Activated naive CD4-positive, alpha-beta T cell treated with anti-CD3 and anti-CD28 coated beads for 36 hours (primary cell): ENCODE measurements at regions of chr1 and their contacts with region 1.

Region 1: DNA sequence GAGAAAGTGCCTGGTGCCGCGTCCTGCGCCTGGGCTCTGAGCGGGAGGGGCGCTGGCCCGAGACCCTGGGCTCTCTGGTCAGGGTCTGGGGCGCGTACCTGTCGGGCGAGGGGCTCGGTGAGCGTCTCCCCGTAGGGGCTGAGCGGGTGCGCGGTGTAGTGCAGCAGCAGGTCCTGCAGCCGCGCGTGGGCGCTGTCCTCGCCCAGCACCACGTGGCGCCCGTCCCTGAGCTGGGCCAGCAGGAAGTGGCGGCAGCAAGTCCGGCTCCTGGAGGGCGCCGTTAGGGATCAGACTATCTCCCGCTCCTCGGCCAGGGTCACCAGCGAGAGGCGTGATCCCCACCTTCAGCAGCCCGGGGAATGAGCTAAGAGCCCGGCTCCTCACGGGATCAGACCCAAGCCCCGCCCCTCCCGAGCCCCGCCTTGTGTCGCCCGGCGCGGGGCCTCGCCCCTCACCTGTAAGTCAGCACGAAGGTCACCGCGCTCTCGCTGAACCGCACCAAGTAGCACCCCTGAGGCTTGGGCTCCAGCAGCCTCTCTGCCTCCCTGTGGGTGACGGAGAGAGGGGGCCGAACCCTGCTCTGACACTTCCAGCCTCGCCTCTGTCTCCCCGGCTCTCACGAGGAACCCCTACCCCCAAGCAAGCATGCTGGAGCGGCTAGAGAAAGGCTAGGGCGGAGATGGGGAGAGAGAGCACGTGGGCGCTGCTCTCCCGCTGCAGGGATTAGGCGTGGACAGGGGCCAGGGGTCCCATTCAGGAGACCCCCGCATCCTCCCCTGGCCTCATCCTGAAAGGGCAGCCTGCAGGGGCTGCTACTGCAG is 2.7 kb downstream of the SH2D2A start:
- DNase-seq: peak; percentile 77
- H3K4me3 Mint-ChIP-seq: peak overlapping the region; percentile 93
- H3K27ac Mint-ChIP-seq: peak overlapping the region; percentile 100
- H3K4me1 Mint-ChIP-seq: peaks cover 62% of the 10 kb centered on the region
- H3K27me3 Mint-ChIP-seq: no peaks in the 10 kb centered on the region

Region 2: DNA sequence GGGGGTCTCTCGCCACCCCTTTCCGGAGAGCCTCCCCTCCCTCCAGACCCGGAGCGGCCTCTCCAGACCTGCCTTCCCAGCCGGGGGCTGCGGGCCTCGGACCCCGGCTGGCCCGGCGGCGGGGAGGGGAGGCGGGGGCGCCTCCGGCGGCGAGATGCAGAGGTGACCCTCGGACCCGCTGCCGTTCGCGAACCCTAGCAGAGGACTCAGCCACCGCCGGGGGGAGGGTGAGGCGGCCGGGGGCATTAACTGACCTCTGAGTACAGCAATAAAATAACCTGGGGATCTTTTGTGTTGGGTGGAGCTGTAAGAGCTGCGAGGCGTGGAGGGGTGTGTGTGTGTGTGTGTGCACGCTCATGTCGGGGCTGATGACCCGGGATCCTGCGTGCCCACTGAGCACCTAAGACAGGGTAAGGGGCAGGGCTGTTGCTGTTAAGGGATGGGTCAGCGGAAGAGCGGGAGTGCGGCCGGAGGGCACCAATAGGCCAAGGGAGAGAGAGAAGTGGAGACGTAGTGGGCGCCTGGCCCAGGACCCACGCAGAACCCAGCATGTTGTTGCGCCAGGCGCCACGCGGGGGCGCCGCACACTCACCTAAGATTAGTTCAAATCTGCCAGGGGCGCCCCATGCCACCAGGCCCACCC is 188.4 kb before region 1 on chr1:
- CTCF ChIA-PET with region 1: no interaction called
- intact Hi-C with region 1: no loop called
- DNase-seq: peak; percentile 65
- H3K4me3 Mint-ChIP-seq: peak overlapping the region; percentile 36
- H3K27ac Mint-ChIP-seq: no peak overlapping the region
- H3K4me1 Mint-ChIP-seq: peaks cover 7% of the 10 kb centered on the region
- H3K27me3 Mint-ChIP-seq: peaks cover 40% of the 10 kb centered on the region

Region 3: GRCh38 chr1:156740679-156741612 is 73.0 kb before region 1 on chr1 and contains the start of gene MRPL24:
- CTCF ChIA-PET with region 1: no interaction called
- intact Hi-C with region 1: loop called (anchors 1 kb)
- DNase-seq: peak; percentile 99
- H3K4me3 Mint-ChIP-seq: peak within 1 kb of the TSS; percentile 98
- H3K27ac Mint-ChIP-seq: peak within 1 kb of the TSS; percentile 98
- H3K4me1 Mint-ChIP-seq: peaks cover 40% of the 10 kb centered on the region
- H3K27me3 Mint-ChIP-seq: no peaks in the 10 kb centered on the region
- total RNA-seq, gene MRPL24: 91.1 to 114 TPM

Region 4: GRCh38 chr1:156751758-156752757 is 61.9 kb before region 1 on chr1:
- CTCF ChIA-PET with region 1: no interaction called
- intact Hi-C with region 1: loop called (anchors 1 kb)
- DNase-seq: peak; percentile 98
- H3K4me3 Mint-ChIP-seq: peak overlapping the region; percentile 86
- H3K27ac Mint-ChIP-seq: peak overlapping the region; percentile 88
- H3K4me1 Mint-ChIP-seq: peaks cover 28% of the 10 kb centered on the region
- H3K27me3 Mint-ChIP-seq: no peaks in the 10 kb centered on the region

Region 5: DNA sequence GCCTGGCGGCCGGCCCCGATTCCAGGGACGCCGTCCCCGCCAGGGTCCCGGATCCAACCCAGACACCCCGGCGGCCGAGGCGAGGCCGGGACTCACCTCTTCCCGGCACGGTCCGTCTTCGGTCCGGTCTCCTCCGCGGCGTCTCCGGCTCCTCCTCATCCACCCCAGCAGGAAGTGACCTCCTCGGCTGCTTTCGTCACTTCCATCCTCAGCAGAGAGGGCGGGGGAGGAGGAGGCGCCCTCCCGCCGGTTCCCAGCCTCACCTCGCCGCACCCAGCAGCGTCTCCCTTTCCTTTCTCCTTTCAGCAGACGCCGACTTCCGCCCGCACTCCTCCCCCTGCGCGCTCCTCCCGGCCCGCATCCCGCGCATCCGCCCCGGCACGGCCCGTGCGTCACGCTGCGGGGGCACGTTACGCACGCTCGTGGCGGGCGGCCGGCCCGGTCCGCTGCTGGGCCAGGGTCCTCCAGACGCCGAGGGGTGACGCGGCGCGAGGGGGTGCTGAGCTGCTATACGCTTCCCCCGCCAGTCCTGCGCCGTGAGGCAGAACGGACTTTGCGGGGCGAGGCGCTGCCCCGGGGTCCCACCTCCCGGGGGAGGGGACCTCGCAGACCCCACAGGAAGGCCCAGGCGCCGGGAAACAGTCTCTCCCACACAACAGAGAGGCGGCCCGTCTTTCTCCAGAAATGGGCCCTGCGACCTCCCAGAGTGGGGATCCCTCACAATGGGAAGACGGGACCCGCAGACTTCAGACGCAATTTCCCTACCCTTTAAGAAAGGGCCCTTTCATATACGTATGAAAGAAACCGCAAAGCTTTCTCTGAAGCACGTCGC is 324.5 kb after region 1 on chr1 and contains the start of gene ETV3:
- CTCF ChIA-PET with region 1: no interaction called
- intact Hi-C with region 1: loop called (anchors 5 kb)
- DNase-seq: peak; percentile 95
- H3K4me3 Mint-ChIP-seq: peak within 1 kb of the TSS; percentile 96
- H3K27ac Mint-ChIP-seq: peak within 1 kb of the TSS; percentile 85
- H3K4me1 Mint-ChIP-seq: peaks cover 56% of the 10 kb centered on the region
- H3K27me3 Mint-ChIP-seq: no peaks in the 10 kb centered on the region
- total RNA-seq, gene ETV3: 23.2 to 23.3 TPM